CD4-positive, alpha-beta memory T cell (primary cell): ENCODE measurements at regions of chr7 and their contacts with region 1.

Region 1: DNA sequence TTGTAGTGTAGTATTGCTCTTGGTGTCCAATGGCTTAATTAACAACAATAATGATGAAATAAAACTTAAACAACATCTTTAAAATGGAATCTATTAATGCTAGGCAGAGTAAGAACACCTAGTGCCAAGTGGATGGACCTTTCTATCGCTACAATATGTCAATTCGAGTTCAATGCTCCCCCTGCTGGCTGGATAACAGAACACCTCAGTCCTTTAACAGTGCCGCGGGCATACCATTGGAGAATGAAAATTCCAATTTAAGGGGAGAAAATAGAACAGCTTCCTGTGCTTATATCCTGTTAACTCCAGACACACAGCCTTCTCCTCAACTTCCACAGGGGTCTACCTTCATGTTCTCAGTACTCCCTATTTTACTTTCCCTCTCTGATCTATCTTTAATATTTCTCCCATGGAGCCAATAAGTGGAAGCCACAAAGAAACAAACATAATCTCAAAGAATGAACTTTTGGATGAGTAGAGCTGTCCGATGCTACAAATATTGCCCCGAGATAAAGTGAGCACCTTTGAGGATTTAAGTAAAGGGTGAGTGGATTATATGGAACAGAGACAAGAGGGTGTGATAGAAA is 41.4 kb downstream of the COL1A2 start:
- DNase-seq: peak; percentile 36 to 48 (median 45)
- H3K4me3 ChIP-seq: no peak overlapping the region
- H3K4me3 Mint-ChIP-seq: no peak overlapping the region
- H3K27ac ChIP-seq: no peak overlapping the region
- H3K27ac Mint-ChIP-seq: peak overlapping the region in 1 of 7 donors; percentile 2
- H3K4me1 ChIP-seq: no peaks in the 10 kb centered on the region
- H3K4me1 Mint-ChIP-seq: peaks cover 0 to 5% (median 2%) of the 10 kb centered on the region in 4 donors
- H3K27me3 ChIP-seq: no peaks in the 10 kb centered on the region
- H3K27me3 Mint-ChIP-seq: peaks cover 9 to 14% of the 10 kb centered on the region in 2 donors

Region 2: GRCh38 chr7:94449148-94449725 is 13.1 kb after region 1 on chr7:
- CTCF ChIA-PET with region 1: interaction called, 35 read pairs
- POLR2A ChIA-PET with region 1: no interaction called
- intact Hi-C with region 1: no loop called
- DNase-seq: peak in 4 of 5 donors; percentile 21 to 26 (median 24)
- H3K4me3 ChIP-seq: no peak overlapping the region
- H3K4me3 Mint-ChIP-seq: peak overlapping the region in 1 of 8 donors; percentile 26
- H3K27ac ChIP-seq: no peak overlapping the region
- H3K27ac Mint-ChIP-seq: no peak overlapping the region
- H3K4me1 ChIP-seq: no peaks in the 10 kb centered on the region
- H3K4me1 Mint-ChIP-seq: no peaks in the 10 kb centered on the region
- H3K27me3 ChIP-seq: no peaks in the 10 kb centered on the region
- H3K27me3 Mint-ChIP-seq: peaks cover 4 to 11% of the 10 kb centered on the region in 2 donors

Region 3: DNA sequence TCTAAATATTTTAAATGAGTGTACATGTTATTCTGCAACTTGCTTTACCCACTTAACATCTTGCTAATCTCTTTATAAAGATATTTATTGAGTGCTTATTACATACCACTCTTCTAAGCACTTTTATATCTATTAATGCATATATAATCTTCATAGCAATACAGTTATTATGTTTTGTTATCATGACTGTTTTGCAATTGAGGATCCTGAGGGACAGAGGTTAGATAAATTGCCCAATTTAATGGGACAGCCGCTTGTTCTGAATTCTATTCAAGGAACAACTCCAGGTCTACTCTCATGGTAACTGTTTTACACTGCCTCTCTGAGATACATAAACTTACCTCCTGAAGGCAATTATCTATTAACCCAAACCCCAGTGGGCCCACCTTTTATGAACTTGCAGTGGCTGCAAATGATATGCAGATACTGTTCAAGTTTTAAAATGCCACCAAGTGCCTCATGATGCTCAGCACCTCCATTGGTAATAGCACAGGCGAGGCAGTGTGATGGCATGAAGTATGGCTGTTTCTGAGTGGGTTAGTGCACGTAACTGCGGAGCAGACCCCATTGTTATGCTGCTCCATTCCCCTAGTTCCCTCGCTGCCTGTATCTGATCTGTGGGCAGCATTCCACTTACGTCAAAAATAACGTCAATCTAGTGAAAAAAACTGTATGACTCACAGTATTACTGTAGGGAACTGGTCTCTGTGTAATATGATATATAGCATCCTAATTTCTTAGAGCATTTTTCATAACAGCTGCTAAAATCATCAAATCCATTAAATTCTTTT is 827.9 kb after region 1 on chr7:
- CTCF ChIA-PET with region 1: no interaction called
- POLR2A ChIA-PET with region 1: no interaction called
- intact Hi-C with region 1: no loop called
- DNase-seq: no peak
- H3K4me3 ChIP-seq: no peak overlapping the region
- H3K4me3 Mint-ChIP-seq: no peak overlapping the region
- H3K27ac ChIP-seq: no peak overlapping the region
- H3K27ac Mint-ChIP-seq: no peak overlapping the region
- H3K4me1 ChIP-seq: no peaks in the 10 kb centered on the region
- H3K4me1 Mint-ChIP-seq: no peaks in the 10 kb centered on the region
- H3K27me3 ChIP-seq: no peaks in the 10 kb centered on the region
- H3K27me3 Mint-ChIP-seq: peaks cover 0 to 1% of the 10 kb centered on the region in 2 donors